Naive thymus-derived CD4-positive, alpha-beta T cell (primary cell): ENCODE measurements at regions of chr1 and their contacts with region 1.

Region 1: GRCh38 chr1:221708987-221709386 is 32.9 kb downstream of the DUSP10 start:
- DNase-seq: peak in 6 of 9 donors; percentile 27 to 86 (median 53)
- ATAC-seq: peak; percentile 63
- H3K4me3 ChIP-seq: no peak overlapping the region
- H3K4me3 Mint-ChIP-seq: peak overlapping the region in 3 of 10 donors; percentile 6 to 20 (median 15)
- H3K27ac ChIP-seq: no peak overlapping the region
- H3K27ac Mint-ChIP-seq: peak overlapping the region; percentile 14 to 81 (median 68)
- H3K4me1 ChIP-seq: peaks cover 20 to 58% of the 10 kb centered on the region in 2 donors
- H3K4me1 Mint-ChIP-seq: peaks cover 30 to 72% (median 57%) of the 10 kb centered on the region in 7 donors
- H3K27me3 ChIP-seq: no peaks in the 10 kb centered on the region
- H3K27me3 Mint-ChIP-seq: no peaks in the 10 kb centered on the region

Region 2: DNA sequence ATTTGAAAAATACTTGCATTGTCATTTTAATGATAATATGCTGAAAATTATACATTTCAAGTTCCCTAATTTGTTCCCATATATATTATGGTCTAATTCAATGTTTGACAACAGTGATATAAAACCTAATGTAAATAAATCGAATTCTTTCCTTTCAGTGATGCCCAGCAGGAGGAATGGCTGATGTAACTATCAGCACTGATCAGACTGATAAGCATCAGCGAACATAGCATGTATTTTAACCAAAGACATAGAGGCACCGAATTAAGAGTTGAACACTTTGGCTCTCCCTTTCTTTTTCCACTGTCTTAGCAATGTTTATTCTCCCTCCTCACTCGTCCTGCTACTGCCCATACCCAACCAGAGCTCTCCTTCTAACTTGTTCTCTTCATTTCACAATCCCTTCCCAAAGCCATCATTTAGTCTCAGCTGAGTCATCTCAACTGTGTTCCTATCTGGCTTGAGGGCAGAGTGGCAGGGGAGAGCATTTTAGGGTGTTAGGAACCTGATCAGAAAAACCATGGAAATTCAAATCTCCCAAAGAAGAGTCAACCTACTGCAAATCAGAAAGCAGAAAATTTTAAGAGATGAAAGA is 1077.7 kb before region 1 on chr1:
- CTCF ChIA-PET with region 1: no interaction called
- POLR2A ChIA-PET with region 1: no interaction called
- intact Hi-C with region 1: no loop called
- DNase-seq: no peak
- ATAC-seq: no peak
- H3K4me3 ChIP-seq: no peak overlapping the region
- H3K4me3 Mint-ChIP-seq: no peak overlapping the region
- H3K27ac ChIP-seq: no peak overlapping the region
- H3K27ac Mint-ChIP-seq: no peak overlapping the region
- H3K4me1 ChIP-seq: no peaks in the 10 kb centered on the region
- H3K4me1 Mint-ChIP-seq: no peaks in the 10 kb centered on the region
- H3K27me3 ChIP-seq: no peaks in the 10 kb centered on the region
- H3K27me3 Mint-ChIP-seq: peaks cover 0 to 48% (median 22%) of the 10 kb centered on the region in 5 donors

Region 3: DNA sequence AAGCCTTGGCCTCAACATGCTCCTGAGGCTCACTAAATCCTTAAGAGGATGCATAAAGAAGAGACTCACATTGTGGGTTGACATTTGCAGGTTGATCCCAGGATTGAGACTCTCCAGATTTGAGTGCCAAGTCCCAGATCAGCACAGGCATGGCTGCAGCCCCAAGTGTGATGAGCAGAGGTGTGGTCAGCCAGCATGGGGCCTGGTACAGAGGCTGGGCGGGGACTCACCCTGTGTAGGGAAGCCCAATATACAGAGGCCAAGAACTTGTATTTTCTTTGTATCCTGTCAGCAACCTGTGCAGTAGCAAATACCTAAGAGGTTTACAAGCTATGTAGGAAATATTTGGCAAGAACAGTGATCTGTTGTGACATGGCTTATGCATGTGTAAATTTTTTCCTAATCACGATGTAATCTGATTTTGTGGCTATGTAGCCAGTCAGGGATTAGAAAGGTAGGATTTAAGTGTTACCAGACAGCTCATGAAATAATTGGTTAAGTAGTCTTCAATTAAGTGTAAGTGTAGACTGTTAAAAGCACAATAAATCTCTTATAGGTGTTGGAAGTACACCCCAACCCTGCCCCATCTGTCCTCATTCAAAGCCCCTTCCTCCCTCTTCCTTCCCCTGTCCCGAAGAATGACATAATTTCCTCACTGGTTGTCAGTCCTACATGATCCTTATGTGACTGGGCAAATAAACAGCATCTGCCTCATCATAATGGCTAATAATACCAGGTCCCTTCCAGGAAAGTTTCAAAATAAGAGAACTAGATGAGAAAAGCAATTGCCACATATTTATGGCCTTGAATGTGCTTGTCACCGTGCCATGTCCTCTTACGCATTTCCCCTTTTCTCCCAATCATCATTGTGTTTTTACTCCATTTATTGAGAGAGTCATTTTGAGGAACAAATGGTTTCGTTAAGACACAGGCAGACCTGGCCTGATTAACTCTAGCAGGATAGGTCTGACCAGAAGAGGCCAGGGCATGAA is 708.8 kb before region 1 on chr1:
- CTCF ChIA-PET with region 1: no interaction called
- POLR2A ChIA-PET with region 1: no interaction called
- intact Hi-C with region 1: no loop called
- DNase-seq: no peak
- ATAC-seq: peak; percentile 88
- H3K4me3 ChIP-seq: no peak overlapping the region
- H3K4me3 Mint-ChIP-seq: no peak overlapping the region
- H3K27ac ChIP-seq: no peak overlapping the region
- H3K27ac Mint-ChIP-seq: no peak overlapping the region
- H3K4me1 ChIP-seq: no peaks in the 10 kb centered on the region
- H3K4me1 Mint-ChIP-seq: no peaks in the 10 kb centered on the region
- H3K27me3 ChIP-seq: no peaks in the 10 kb centered on the region
- H3K27me3 Mint-ChIP-seq: no peaks in the 10 kb centered on the region

Region 4: DNA sequence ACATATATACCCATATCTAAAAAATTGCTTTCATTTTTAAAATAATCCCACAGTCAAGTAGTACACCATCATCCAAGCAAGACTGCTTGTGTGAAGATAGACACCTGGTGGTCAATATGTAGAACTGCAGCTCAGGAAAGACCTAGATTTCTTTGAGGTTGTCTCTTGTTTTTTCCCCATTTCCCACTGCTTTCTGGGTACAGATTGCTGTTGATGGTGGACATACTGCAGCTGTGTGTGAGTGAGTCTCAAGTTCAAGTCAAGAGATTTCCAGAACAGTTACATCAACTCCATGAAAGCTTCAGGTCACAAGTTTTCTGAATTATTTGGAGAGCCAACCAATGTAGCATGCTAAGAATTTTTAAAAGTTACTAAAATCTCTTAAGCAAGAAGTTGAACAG is 273.5 kb before region 1 on chr1:
- CTCF ChIA-PET with region 1: no interaction called
- POLR2A ChIA-PET with region 1: no interaction called
- intact Hi-C with region 1: loop called in 1 of 2 experiments (anchors 5 kb)
- DNase-seq: peak in 6 of 9 donors; percentile 2 to 47 (median 26)
- ATAC-seq: peak; percentile 74
- H3K4me3 ChIP-seq: no peak overlapping the region
- H3K4me3 Mint-ChIP-seq: no peak overlapping the region
- H3K27ac ChIP-seq: no peak overlapping the region
- H3K27ac Mint-ChIP-seq: no peak overlapping the region
- H3K4me1 ChIP-seq: no peaks in the 10 kb centered on the region
- H3K4me1 Mint-ChIP-seq: peaks cover 0 to 27% (median 7%) of the 10 kb centered on the region in 7 donors
- H3K27me3 ChIP-seq: no peaks in the 10 kb centered on the region
- H3K27me3 Mint-ChIP-seq: peaks cover 2 to 22% (median 17%) of the 10 kb centered on the region in 5 donors

Region 5: GRCh38 chr1:221487781-221488524 is 221.0 kb before region 1 on chr1:
- CTCF ChIA-PET with region 1: no interaction called
- POLR2A ChIA-PET with region 1: no interaction called
- intact Hi-C with region 1: no loop called
- DNase-seq: no peak
- ATAC-seq: no peak
- H3K4me3 ChIP-seq: no peak overlapping the region
- H3K4me3 Mint-ChIP-seq: no peak overlapping the region
- H3K27ac ChIP-seq: no peak overlapping the region
- H3K27ac Mint-ChIP-seq: no peak overlapping the region
- H3K4me1 ChIP-seq: no peaks in the 10 kb centered on the region
- H3K4me1 Mint-ChIP-seq: no peaks in the 10 kb centered on the region
- H3K27me3 ChIP-seq: no peaks in the 10 kb centered on the region
- H3K27me3 Mint-ChIP-seq: peaks cover 0 to 8% (median 2%) of the 10 kb centered on the region in 5 donors

Region 6: DNA sequence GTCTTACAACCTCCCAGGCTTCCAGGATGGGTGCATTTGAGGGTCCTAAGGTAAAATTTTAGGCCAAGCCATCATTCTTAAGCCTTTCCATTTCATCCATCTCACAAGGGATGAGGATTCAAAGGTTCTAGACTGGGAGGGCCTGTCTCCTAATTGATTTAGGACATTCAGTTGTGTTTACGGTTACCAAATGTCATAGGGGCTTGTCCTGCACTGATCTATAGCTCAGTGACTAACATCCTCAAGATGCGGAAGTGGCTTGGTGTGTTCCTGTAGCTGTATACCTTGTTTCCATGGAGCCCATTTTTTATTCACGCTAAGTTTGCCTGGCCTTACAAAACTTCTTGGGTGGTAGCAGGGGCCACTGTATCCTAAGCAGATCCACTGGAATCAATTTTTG is 19.8 kb before region 1 on chr1:
- CTCF ChIA-PET with region 1: interaction called, 3 read pairs
- POLR2A ChIA-PET with region 1: interaction called, 3 read pairs
- intact Hi-C with region 1: loop called (anchors 1 to 2 kb)
- DNase-seq: peak in 1 of 9 donors; percentile 11
- ATAC-seq: peak; percentile 85
- H3K4me3 ChIP-seq: no peak overlapping the region
- H3K4me3 Mint-ChIP-seq: no peak overlapping the region
- H3K27ac ChIP-seq: no peak overlapping the region
- H3K27ac Mint-ChIP-seq: peak overlapping the region in 2 of 9 donors; percentile 48 to 77
- H3K4me1 ChIP-seq: no peaks in the 10 kb centered on the region
- H3K4me1 Mint-ChIP-seq: peaks cover 0 to 25% (median 0%) of the 10 kb centered on the region in 7 donors
- H3K27me3 ChIP-seq: no peaks in the 10 kb centered on the region
- H3K27me3 Mint-ChIP-seq: no peaks in the 10 kb centered on the region

Region 7: GRCh38 chr1:221725735-221726672 is 17.0 kb after region 1 on chr1:
- CTCF ChIA-PET with region 1: interaction called, 8 read pairs
- POLR2A ChIA-PET with region 1: interaction called, 9 read pairs
- intact Hi-C with region 1: loop called (anchors 1 kb)
- DNase-seq: peak in 4 of 9 donors; percentile 29 to 47 (median 39)
- ATAC-seq: peak; percentile 61
- H3K4me3 ChIP-seq: peak overlapping the region; percentile 11
- H3K4me3 Mint-ChIP-seq: peak overlapping the region in 9 of 10 donors; percentile 45 to 83 (median 72)
- H3K27ac ChIP-seq: peak overlapping the region; percentile 15
- H3K27ac Mint-ChIP-seq: peak overlapping the region; percentile 16 to 90 (median 74)
- H3K4me1 ChIP-seq: peaks cover 24 to 29% of the 10 kb centered on the region in 2 donors
- H3K4me1 Mint-ChIP-seq: peaks cover 39 to 74% (median 67%) of the 10 kb centered on the region in 7 donors
- H3K27me3 ChIP-seq: no peaks in the 10 kb centered on the region
- H3K27me3 Mint-ChIP-seq: no peaks in the 10 kb centered on the region

Region 8: GRCh38 chr1:221829327-221830015 is 120.5 kb after region 1 on chr1:
- CTCF ChIA-PET with region 1: no interaction called
- POLR2A ChIA-PET with region 1: no interaction called
- intact Hi-C with region 1: loop called in 1 of 2 experiments (anchors 2 kb)
- DNase-seq: peak in 1 of 9 donors; percentile 42
- ATAC-seq: peak; percentile 88
- H3K4me3 ChIP-seq: peak overlapping the region; percentile 16
- H3K4me3 Mint-ChIP-seq: peak overlapping the region in 4 of 10 donors; percentile 3 to 74 (median 44)
- H3K27ac ChIP-seq: no peak overlapping the region
- H3K27ac Mint-ChIP-seq: peak overlapping the region in 3 of 9 donors; percentile 61 to 95 (median 68)
- H3K4me1 ChIP-seq: peaks cover 15 to 36% of the 10 kb centered on the region in 2 donors
- H3K4me1 Mint-ChIP-seq: peaks cover 13 to 79% (median 29%) of the 10 kb centered on the region in 7 donors
- H3K27me3 ChIP-seq: no peaks in the 10 kb centered on the region
- H3K27me3 Mint-ChIP-seq: no peaks in the 10 kb centered on the region

Region 9: DNA sequence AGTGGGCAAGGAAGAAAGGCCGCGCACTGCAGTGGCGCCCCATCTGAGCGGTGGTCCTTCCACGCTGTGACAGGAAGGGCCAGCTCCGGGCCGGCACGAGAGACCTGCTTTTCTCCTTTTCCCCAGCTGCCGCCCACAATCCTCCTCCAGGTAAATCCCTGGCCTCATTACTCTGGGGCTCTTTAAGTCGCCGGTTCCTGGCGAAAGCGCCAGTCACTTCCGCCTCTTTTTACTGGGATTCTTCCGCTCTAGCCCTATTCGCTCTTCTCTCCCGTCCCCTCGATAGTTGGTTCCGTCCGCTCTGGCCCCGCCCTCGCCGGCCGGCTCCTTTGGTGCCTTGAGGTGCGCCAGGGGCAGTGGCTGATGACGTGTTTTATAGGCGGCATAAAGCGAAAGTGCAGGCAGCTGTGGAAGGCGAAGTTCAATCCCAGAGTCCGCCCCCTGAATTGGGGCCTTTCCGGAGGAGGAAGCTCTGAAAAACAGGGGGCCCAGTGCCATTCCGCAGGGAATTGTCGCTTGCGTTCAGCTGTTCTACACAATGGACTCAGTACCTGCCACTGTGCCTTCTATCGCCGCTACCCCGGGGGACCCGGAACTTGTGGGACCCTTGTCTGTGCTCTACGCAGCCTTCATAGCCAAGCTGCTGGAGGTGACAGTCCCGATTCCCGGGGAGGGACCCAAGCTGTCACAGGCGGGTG is 935.1 kb after region 1 on chr1:
- CTCF ChIA-PET with region 1: no interaction called
- POLR2A ChIA-PET with region 1: no interaction called
- intact Hi-C with region 1: loop called in 1 of 2 experiments (anchors 10 kb)
- DNase-seq: peak; percentile 93 to 98 (median 96)
- ATAC-seq: peak; percentile 97
- H3K4me3 ChIP-seq: peak overlapping the region; percentile 99
- H3K4me3 Mint-ChIP-seq: peak overlapping the region; percentile 87 to 99 (median 97)
- H3K27ac ChIP-seq: peak overlapping the region; percentile 92
- H3K27ac Mint-ChIP-seq: peak overlapping the region; percentile 95 to 99 (median 98)
- H3K4me1 ChIP-seq: peaks cover 12% of the 10 kb centered on the region in 2 donors
- H3K4me1 Mint-ChIP-seq: peaks cover 12 to 59% (median 49%) of the 10 kb centered on the region in 7 donors
- H3K27me3 ChIP-seq: no peaks in the 10 kb centered on the region
- H3K27me3 Mint-ChIP-seq: no peaks in the 10 kb centered on the region